ENCODE measurements at regions of chr10 and their contacts with region 1.

Region 1: DNA sequence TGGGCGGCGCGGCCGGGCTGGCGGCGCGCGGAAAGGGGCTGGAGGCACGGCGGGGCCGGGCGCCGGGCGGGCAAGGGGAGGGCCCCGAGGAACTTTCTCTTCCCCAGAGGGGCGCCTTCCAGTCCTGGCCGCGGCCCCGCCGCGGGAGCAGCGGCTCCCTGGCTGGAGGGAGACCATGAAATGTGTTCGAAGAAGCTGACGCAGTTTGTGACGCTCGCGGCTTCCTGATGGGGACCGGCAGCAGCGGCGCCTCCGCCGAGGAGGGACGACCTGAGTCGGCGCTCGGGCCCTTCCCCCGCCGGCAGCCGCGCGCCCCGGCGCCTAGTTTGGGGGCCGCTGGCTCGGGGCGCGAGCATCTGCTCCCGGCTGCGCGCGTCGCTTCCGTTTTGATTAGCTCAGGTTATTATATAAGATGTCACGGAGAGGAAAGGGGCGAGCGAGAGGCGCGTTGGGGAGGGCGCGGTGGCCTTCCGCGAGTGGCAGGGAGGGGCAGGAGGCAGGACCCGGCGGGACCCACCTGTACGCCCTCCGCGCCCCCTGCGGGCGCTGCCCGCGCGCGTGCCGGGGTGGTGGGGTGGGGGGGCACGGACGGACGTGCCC is 57.1 kb upstream of the PCGF5 start:
- DNase-seq: peak; percentile 51
- H3K4me3 ChIP-seq: peak overlapping the region; percentile 69 to 73 (median 73)
- H3K27ac ChIP-seq: peak overlapping the region; percentile 61
- H3K4me1 ChIP-seq: peaks cover 12% of the 10 kb centered on the region
- H3K27me3 ChIP-seq: no peaks in the 10 kb centered on the region
- CTCF ChIP-seq: no peak

Region 2: GRCh38 chr10:91123246-91123645 is 40.1 kb before region 1 on chr10:
- CTCF ChIA-PET with region 1: interaction called, 12 read pairs
- dilution Hi-C with region 1: no loop called
- in situ Hi-C with region 1: no loop called
- intact Hi-C with region 1: no loop called
- DNase-seq: no peak
- H3K4me3 ChIP-seq: no peak overlapping the region
- H3K27ac ChIP-seq: no peak overlapping the region
- H3K4me1 ChIP-seq: no peaks in the 10 kb centered on the region
- H3K27me3 ChIP-seq: peaks cover 6% of the 10 kb centered on the region
- CTCF ChIP-seq: no peak

Region 3: GRCh38 chr10:91220194-91220953 is 57.0 kb after region 1 on chr10 and contains the start of gene PCGF5:
- CTCF ChIA-PET with region 1: no interaction called
- dilution Hi-C with region 1: no loop called
- in situ Hi-C with region 1: no loop called
- intact Hi-C with region 1: loop called (anchors 5 kb)
- DNase-seq: peak; percentile 86
- H3K4me3 ChIP-seq: peak within 1 kb of the TSS; percentile 86 to 90 (median 86)
- H3K27ac ChIP-seq: peak within 1 kb of the TSS; percentile 58
- H3K4me1 ChIP-seq: peaks cover 16% of the 10 kb centered on the region
- H3K27me3 ChIP-seq: no peaks in the 10 kb centered on the region
- CTCF ChIP-seq: peak in 1 of 2 donors; percentile 42
- total RNA-seq, gene PCGF5: 17.6 to 22.5 TPM